Ascending aorta (tissue), 2 donors: ENCODE measurements at regions of chr2 and their contacts with region 1.

Region 1: GRCh38 chr2:215435809-215436704 is at the start of gene FN1:
- DNase-seq: peak; percentile 84 to 97
- H3K4me3 ChIP-seq: peak within 1 kb of the TSS; percentile 80
- H3K27ac ChIP-seq: peak within 1 kb of the TSS; percentile 86 to 99
- H3K4me1 ChIP-seq: peaks cover 9 to 18% of the 10 kb centered on the region in 2 donors
- H3K27me3 ChIP-seq: no peaks in the 10 kb centered on the region
- CTCF ChIP-seq: no peak
- total RNA-seq, gene FN1: 5,098 TPM

Region 2: DNA sequence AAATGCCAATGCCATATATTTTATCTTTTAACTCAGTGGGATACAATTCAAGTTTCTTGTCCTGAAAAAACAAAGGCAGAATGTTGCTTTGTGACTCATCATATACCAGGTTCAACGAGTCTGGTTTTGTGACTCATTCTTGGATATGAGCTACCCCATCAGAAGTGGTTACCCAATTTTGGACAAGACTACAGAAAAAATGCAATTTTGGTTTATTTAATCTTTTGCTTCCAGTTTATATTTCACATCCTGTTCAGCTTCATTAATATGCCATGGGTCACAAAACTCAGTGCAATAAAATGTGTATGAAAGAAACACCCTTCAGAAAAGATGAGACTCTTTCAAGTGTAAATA is 25.1 kb before region 1 on chr2:
- intact Hi-C with region 1: loop called (anchors 2 kb)
- DNase-seq: no peak
- H3K4me3 ChIP-seq: no peak overlapping the region
- H3K27ac ChIP-seq: peak overlapping the region; percentile 55 to 64
- H3K4me1 ChIP-seq: peaks cover 0 to 4% of the 10 kb centered on the region in 2 donors
- H3K27me3 ChIP-seq: no peaks in the 10 kb centered on the region
- CTCF ChIP-seq: no peak

Region 3: GRCh38 chr2:215505044-215505786 is 69.2 kb after region 1 on chr2:
- intact Hi-C with region 1: no loop called
- DNase-seq: no peak
- H3K4me3 ChIP-seq: peak overlapping the region in 1 of 2 donors; percentile 17
- H3K27ac ChIP-seq: peak overlapping the region; percentile 55 to 75
- H3K4me1 ChIP-seq: peaks cover 2 to 10% of the 10 kb centered on the region in 2 donors
- H3K27me3 ChIP-seq: no peaks in the 10 kb centered on the region
- CTCF ChIP-seq: no peak

Region 4: DNA sequence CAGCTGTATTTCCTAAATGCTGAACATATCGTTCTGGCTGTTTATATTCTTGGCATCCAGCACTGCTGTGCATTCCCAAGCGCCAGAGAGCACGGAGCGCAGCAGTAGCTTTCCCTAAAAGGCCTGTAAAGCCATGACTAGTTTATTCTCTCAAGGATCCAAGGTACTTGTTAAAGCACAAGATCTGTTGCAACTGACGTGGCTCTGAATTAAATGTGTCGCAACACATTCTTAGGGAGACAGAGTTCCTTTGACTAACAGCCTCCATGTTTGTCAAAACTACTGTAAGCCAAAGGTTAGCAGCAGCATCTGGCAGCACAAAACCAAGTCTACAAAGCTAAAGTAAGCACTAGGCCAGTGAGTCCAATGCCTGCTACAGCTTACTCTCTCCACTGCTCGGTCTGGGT is 188.4 kb after region 1 on chr2:
- intact Hi-C with region 1: loop called (anchors 5 kb)
- DNase-seq: peak; percentile 39 to 87
- H3K4me3 ChIP-seq: no peak overlapping the region
- H3K27ac ChIP-seq: peak overlapping the region; percentile 73 to 78
- H3K4me1 ChIP-seq: peaks cover 0 to 27% of the 10 kb centered on the region in 2 donors
- H3K27me3 ChIP-seq: no peaks in the 10 kb centered on the region
- CTCF ChIP-seq: no peak

Region 5: DNA sequence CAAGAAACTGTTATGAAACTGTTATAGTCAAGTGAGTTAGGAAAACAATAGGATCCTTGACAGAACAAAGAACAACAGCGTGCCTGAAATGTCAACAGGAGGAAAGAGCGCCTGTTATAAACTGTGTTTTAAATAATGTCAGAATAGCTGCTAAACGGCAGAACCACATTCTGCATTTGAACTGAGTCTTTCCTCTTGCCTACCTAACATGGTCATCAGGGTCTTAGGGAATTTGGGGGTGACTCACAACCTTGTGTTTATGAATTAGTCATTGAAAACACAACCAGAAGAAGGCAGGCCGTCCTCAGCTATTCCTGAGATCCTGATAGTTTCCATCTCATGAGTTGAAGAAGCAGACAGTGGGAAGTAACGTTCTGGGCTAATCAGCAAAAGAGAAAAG is 221.8 kb after region 1 on chr2:
- intact Hi-C with region 1: loop called (anchors 2 kb)
- DNase-seq: peak in 1 of 2 donors; percentile 78
- H3K4me3 ChIP-seq: no peak overlapping the region
- H3K27ac ChIP-seq: peak overlapping the region; percentile 76 to 80
- H3K4me1 ChIP-seq: peaks cover 3 to 31% of the 10 kb centered on the region in 2 donors
- H3K27me3 ChIP-seq: no peaks in the 10 kb centered on the region
- CTCF ChIP-seq: no peak

Region 6: GRCh38 chr2:215843579-215843978 is 407.5 kb after region 1 on chr2:
- intact Hi-C with region 1: loop called (anchors 5 kb)
- DNase-seq: peak; percentile 44 to 89
- H3K4me3 ChIP-seq: no peak overlapping the region
- H3K27ac ChIP-seq: peak overlapping the region; percentile 62 to 65
- H3K4me1 ChIP-seq: peaks cover 0 to 14% of the 10 kb centered on the region in 2 donors
- H3K27me3 ChIP-seq: no peaks in the 10 kb centered on the region
- CTCF ChIP-seq: no peak

Region 7: GRCh38 chr2:215920244-215921100 is 484.4 kb after region 1 on chr2:
- intact Hi-C with region 1: loop called (anchors 5 kb)
- DNase-seq: peak in 1 of 2 donors; percentile 78
- H3K4me3 ChIP-seq: no peak overlapping the region
- H3K27ac ChIP-seq: no peak overlapping the region
- H3K4me1 ChIP-seq: peaks cover 5 to 16% of the 10 kb centered on the region in 2 donors
- H3K27me3 ChIP-seq: no peaks in the 10 kb centered on the region
- CTCF ChIP-seq: peak; percentile 81 to 85 (median 83)